Endothelial cell of umbilical vein (primary cell): ENCODE measurements at regions of chr2 and their contacts with region 1.

Region 1: DNA sequence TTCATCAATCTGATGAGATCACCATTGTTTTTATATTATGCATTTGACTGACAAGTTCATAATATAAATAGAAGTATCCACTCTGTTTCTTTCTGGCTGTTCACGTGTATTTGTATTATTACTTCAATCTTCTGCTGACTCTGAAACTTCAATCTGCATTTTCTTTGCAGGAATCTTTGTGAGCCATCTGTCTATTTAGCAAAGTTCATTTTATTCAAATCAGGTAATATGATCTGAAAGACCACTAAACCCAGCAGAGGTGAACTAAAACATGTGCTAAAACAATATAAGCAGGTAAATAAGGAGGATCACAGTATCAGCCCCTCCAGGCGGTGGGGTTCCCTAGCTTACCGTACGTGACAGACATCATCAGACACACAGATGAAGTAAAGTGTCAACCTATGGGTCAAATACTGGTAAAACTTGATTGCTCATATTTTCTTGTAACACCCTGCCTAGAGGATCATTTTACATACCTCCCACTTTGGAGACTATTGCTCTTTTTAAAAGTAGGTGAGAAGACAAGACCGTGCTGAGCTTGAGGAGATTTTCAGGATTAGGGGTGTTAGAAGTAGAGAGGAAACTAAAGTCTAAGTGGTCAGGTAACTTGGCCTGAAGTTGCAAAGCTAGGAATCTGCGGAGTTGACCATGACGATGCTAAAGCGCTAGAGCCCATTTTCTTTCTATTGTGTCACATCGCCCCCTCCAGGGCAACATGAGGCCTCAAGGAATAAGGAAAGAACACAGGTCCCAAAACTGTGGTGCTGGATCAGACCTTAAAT is 9.0 kb downstream of the DTNB start:
- DNase-seq: peak; percentile 83
- H3K4me3 ChIP-seq: no peak overlapping the region
- H3K27ac ChIP-seq: no peak overlapping the region
- H3K4me1 ChIP-seq: peaks cover 4% of the 10 kb centered on the region
- H3K27me3 ChIP-seq: no peaks in the 10 kb centered on the region
- CTCF ChIP-seq: peak; percentile 77 to 79
- POLR2A ChIP-seq: no peak

Region 2: DNA sequence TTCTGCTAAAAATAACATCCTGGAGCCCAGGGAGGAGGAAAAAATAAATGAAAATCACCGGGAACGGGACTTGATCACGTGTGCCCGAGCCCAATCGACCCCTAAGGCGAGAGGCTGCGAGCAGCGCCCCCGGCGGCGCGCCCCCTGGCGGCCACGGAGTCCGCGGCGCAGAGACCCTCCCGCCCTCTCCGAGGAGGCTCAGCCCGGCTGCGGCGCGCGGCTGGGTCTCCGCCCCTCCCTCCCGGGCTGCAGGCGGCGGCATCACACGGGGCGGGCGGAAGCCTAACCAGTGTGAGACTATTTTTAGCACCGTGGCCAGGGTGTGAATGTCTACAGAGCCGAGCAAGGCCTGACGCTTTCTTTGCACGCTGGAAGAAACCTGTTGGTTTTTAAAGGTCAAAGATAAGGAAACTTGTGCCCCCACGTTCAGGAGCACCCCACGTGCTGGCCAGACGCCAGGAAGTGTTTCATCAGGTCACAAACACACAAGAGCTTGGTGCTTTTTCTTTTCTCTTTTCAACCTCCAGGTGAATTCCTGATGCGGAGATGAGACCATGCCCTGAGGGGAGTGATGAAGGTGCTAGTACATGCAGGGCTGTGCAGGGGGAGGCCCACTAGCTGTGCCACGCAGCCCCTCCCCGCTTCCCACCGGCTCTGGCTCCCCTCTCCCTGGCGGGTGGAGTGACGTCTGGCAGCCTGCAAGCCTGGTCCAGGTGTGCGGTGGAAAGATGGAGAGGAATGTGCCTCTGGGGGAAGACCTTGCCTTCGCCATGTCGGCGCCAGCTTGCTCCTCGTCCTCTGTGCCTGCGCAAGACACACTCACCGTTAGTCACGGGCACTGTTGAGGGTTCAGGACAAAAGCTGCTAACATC is 287.4 kb before region 1 on chr2:
- CTCF ChIA-PET with region 1: interaction called, 10 read pairs
- POLR2A ChIA-PET with region 1: no interaction called
- dilution Hi-C with region 1: no loop called
- intact Hi-C with region 1: loop called (anchors 5 kb)
- DNase-seq: peak; percentile 82
- H3K4me3 ChIP-seq: peak overlapping the region in 1 of 3 experiments; percentile 13
- H3K27ac ChIP-seq: no peak overlapping the region
- H3K4me1 ChIP-seq: peaks cover 11% of the 10 kb centered on the region
- H3K27me3 ChIP-seq: no peaks in the 10 kb centered on the region
- CTCF ChIP-seq: peak; percentile 86 to 99
- POLR2A ChIP-seq: no peak

Region 3: GRCh38 chr2:25597881-25598280 is 66.5 kb before region 1 on chr2:
- CTCF ChIA-PET with region 1: interaction called, 24 read pairs
- POLR2A ChIA-PET with region 1: no interaction called
- dilution Hi-C with region 1: no loop called
- intact Hi-C with region 1: no loop called
- DNase-seq: no peak
- H3K4me3 ChIP-seq: no peak overlapping the region
- H3K27ac ChIP-seq: no peak overlapping the region
- H3K4me1 ChIP-seq: peaks cover 2% of the 10 kb centered on the region
- H3K27me3 ChIP-seq: no peaks in the 10 kb centered on the region
- CTCF ChIP-seq: no peak
- POLR2A ChIP-seq: no peak

Region 4: GRCh38 chr2:25632396-25632795 is 32.0 kb before region 1 on chr2:
- CTCF ChIA-PET with region 1: interaction called, 11 read pairs
- POLR2A ChIA-PET with region 1: no interaction called
- dilution Hi-C with region 1: no loop called
- intact Hi-C with region 1: no loop called
- DNase-seq: no peak
- H3K4me3 ChIP-seq: no peak overlapping the region
- H3K27ac ChIP-seq: no peak overlapping the region
- H3K4me1 ChIP-seq: no peaks in the 10 kb centered on the region
- H3K27me3 ChIP-seq: no peaks in the 10 kb centered on the region
- CTCF ChIP-seq: no peak
- POLR2A ChIP-seq: no peak

Region 5: GRCh38 chr2:25651071-25651470 is 13.3 kb before region 1 on chr2:
- CTCF ChIA-PET with region 1: interaction called, 29 read pairs
- POLR2A ChIA-PET with region 1: no interaction called
- dilution Hi-C with region 1: no loop called
- intact Hi-C with region 1: loop called (anchors 1 kb)
- DNase-seq: peak; percentile 96
- H3K4me3 ChIP-seq: no peak overlapping the region
- H3K27ac ChIP-seq: peak overlapping the region; percentile 87
- H3K4me1 ChIP-seq: peaks cover 21% of the 10 kb centered on the region
- H3K27me3 ChIP-seq: no peaks in the 10 kb centered on the region
- CTCF ChIP-seq: no peak
- POLR2A ChIP-seq: no peak

Region 6: DNA sequence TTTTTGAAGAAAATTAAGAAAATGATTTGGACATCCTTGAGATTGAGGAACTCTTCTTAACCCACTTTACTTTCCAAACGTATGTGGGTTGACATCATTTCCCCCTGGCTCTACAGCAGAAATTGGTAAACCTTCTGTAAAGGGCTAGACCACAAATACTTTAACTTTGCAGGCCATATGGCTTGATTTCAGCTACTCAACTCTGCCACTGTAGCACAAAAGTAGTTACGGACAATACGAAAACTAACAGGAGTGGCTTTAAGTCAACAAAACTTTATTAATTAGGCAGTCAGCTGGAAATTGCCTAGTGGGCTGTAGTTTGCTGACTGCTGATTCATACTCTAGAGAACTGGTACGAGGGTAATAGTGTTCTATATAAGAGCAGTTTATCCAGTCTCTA is 92.2 kb after region 1 on chr2:
- CTCF ChIA-PET with region 1: no interaction called
- POLR2A ChIA-PET with region 1: no interaction called
- dilution Hi-C with region 1: no loop called
- intact Hi-C with region 1: no loop called
- DNase-seq: no peak
- H3K4me3 ChIP-seq: no peak overlapping the region
- H3K27ac ChIP-seq: no peak overlapping the region
- H3K4me1 ChIP-seq: no peaks in the 10 kb centered on the region
- H3K27me3 ChIP-seq: no peaks in the 10 kb centered on the region
- CTCF ChIP-seq: no peak
- POLR2A ChIP-seq: no peak

Region 7: GRCh38 chr2:27537287-27537686 is 1872.9 kb after region 1 on chr2:
- CTCF ChIA-PET with region 1: no interaction called
- POLR2A ChIA-PET with region 1: no interaction called
- dilution Hi-C with region 1: no loop called
- intact Hi-C with region 1: no loop called
- DNase-seq: peak; percentile 46
- H3K4me3 ChIP-seq: no peak overlapping the region
- H3K27ac ChIP-seq: no peak overlapping the region
- H3K4me1 ChIP-seq: no peaks in the 10 kb centered on the region
- H3K27me3 ChIP-seq: no peaks in the 10 kb centered on the region
- CTCF ChIP-seq: no peak
- POLR2A ChIP-seq: no peak